ENCODE measurements at regions of chr4 and their contacts with region 1.

Region 1: DNA sequence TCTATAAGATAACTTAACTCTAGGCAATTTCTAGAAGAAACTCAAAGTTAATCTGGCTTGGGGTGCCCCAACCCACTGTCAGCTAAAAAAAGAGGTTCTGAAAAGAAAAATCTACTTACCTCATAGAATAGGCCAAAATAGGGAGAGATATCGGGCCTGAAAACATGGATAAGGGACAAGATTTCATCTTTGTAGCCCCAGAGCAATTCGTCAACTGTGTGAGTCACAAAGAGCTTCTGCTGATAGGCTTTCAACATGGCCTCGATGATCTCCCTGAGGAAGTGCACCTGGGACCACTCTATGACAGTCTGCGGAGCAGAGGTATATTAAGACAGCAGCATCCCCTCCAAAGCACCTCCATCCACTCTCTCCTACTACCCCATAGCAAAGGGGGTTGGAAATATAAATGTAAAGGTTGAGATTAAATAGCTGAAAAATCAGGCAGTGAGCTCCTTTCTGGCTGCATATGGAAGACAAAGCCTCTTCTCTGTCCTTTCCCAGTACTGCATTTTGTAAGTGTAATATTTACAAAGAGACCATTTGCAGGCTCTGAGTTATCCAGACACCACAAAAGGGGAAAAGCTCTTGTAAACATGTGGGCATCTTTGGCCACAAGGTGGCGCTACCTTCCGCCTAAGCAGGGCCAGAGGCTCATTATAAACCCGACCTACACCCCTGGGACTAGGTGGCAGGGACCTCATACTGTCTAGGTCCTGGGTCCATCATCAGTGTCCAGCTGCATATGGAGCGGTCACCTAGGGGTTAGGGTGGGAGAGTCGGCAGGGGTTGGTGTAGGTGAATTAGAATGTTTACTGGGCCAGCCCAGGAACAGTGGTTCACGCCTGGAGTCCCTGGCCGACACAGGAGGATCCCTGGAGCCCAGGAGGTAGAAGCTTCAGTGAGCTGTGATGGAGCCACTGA is 31.5 kb upstream of the NUP54 start:
- DNase-seq: peak; percentile 83
- ATAC-seq: peak; percentile 84
- H3K4me3 ChIP-seq: no peak overlapping the region
- H3K4me3 Mint-ChIP-seq: no peak overlapping the region
- H3K27ac ChIP-seq: no peak overlapping the region
- H3K27ac Mint-ChIP-seq: no peak overlapping the region
- H3K4me1 ChIP-seq: no peaks in the 10 kb centered on the region
- H3K4me1 Mint-ChIP-seq: peaks cover 4% of the 10 kb centered on the region
- H3K27me3 ChIP-seq: no peaks in the 10 kb centered on the region
- H3K27me3 Mint-ChIP-seq: no peaks in the 10 kb centered on the region
- CTCF ChIP-seq: peak; percentile 95

Region 2: DNA sequence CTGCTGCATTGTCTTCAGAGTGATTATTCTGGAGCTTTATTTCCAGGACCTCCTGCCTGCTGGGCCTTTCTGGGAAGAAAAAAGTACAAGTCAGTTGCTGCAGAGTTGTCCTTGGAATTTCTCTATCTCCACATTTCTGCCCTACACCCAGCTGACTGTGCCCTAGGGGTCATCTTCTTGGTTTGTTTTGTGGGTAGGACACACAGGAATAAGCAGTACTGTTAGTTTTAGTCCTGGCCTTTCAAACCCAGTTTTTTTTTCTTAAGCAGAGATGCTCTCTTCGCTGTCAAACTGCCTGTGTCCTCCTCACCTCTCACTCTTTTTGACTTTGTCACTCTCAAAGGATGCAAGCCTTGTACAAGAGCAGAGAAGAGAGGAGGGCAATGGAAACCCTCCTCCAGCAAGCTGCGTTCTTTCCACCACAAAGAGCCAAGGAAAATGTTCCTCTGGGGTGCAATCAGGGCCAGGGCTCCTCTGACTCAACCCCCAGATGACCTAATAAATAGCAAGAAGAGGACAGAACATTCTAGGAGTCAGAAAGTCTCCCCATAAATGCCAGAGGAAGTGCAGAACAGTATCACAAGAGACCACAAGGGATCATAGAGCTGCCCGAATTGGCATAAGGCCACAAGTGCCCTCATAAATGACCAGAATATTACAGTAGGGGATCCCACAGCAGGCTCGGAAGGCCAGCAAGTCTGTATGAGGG is 851.7 kb before region 1 on chr4:
- CTCF ChIA-PET with region 1: no interaction called
- POLR2A ChIA-PET with region 1: no interaction called
- intact Hi-C with region 1: no loop called
- DNase-seq: no peak
- ATAC-seq: no peak
- H3K4me3 ChIP-seq: no peak overlapping the region
- H3K4me3 Mint-ChIP-seq: no peak overlapping the region
- H3K27ac ChIP-seq: no peak overlapping the region
- H3K27ac Mint-ChIP-seq: no peak overlapping the region
- H3K4me1 ChIP-seq: no peaks in the 10 kb centered on the region
- H3K4me1 Mint-ChIP-seq: no peaks in the 10 kb centered on the region
- H3K27me3 ChIP-seq: peaks cover 0 to 11% (median 4%) of the 10 kb centered on the region in 4 experiments
- H3K27me3 Mint-ChIP-seq: peaks cover 24% of the 10 kb centered on the region
- CTCF ChIP-seq: no peak

Region 3: DNA sequence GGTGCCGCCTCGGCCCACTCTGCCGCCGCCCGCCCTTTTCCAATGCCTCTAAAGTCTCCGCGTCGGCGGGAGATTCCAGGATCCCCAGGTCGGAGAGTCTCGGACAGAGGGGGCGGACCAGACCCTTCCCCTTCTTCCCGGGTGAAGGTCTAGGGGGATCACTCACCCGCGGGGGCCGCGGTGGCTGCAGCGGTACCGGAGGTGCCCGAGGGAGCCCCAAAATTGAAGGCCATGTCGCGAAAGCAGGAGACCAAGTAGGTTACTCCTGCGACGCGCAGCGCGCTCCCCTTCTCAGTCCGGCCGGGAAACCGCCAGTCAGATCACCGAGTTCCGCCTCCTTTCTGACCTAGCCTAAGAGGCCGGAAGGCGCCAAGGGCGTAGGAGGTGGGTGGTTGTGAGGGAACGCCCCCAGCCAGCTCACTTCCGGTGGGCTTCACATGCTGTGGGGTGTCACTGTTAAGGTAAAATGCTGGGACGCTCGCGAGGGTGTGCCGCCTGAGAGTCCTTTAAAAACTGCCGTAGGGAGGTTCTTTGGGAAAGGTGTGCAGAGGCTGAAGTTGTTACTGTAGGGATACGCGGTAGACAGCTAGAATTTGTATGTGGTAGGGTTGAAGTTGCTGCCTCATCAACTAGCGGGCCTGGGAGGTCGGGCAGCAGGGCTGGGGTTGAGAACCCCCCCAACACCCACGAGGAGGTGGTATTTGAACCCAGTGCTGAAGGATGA is 31.4 kb before region 1 on chr4 and contains the start of gene NUP54:
- CTCF ChIA-PET with region 1: no interaction called
- POLR2A ChIA-PET with region 1: interaction called, 10 read pairs
- intact Hi-C with region 1: no loop called
- DNase-seq: peak; percentile 95
- ATAC-seq: peak; percentile 98
- H3K4me3 ChIP-seq: peak within 1 kb of the TSS; percentile 71 to 98 (median 97)
- H3K4me3 Mint-ChIP-seq: peak within 1 kb of the TSS; percentile 98
- H3K27ac ChIP-seq: peak within 1 kb of the TSS; percentile 77 to 91
- H3K27ac Mint-ChIP-seq: peak within 1 kb of the TSS; percentile 89
- H3K4me1 ChIP-seq: peaks cover 22 to 28% of the 10 kb centered on the region in 2 donors
- H3K4me1 Mint-ChIP-seq: peaks cover 35% of the 10 kb centered on the region
- H3K27me3 ChIP-seq: no peaks in the 10 kb centered on the region
- H3K27me3 Mint-ChIP-seq: no peaks in the 10 kb centered on the region
- CTCF ChIP-seq: no peak
- total RNA-seq, gene NUP54: 71.0 and 71.4 TPM in 2 replicates

Region 4: GRCh38 chr4:76198411-76199237 is 19.0 kb after region 1 on chr4:
- CTCF ChIA-PET with region 1: interaction called, 24 read pairs
- POLR2A ChIA-PET with region 1: no interaction called
- intact Hi-C with region 1: no loop called
- DNase-seq: peak; percentile 56
- ATAC-seq: peak; percentile 32
- H3K4me3 ChIP-seq: no peak overlapping the region
- H3K4me3 Mint-ChIP-seq: peak overlapping the region; percentile 36
- H3K27ac ChIP-seq: peak overlapping the region; percentile 30 to 42
- H3K27ac Mint-ChIP-seq: peak overlapping the region; percentile 64
- H3K4me1 ChIP-seq: peaks cover 50 to 54% of the 10 kb centered on the region in 2 donors
- H3K4me1 Mint-ChIP-seq: peaks cover 53% of the 10 kb centered on the region
- H3K27me3 ChIP-seq: no peaks in the 10 kb centered on the region
- H3K27me3 Mint-ChIP-seq: no peaks in the 10 kb centered on the region
- CTCF ChIP-seq: no peak

Region 5: DNA sequence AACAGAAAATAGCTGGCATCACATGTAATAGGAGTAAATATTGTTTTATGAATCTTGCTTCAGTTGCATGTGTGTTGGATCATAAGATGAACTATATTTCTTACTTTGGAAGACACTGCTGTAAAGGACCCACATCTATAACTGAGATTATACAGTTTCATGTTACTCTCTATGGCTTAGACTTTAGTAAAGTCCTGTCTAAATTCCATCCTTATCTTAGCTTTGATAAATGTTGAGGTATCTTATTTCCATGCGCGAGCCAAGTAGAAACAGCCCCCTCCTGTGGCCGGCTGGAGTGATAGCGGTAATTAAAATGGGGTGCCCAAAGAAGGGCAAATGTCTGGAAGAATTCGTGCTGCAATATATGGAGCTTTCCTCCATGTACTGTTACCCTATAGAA is 198.3 kb after region 1 on chr4:
- CTCF ChIA-PET with region 1: interaction called, 35 read pairs
- POLR2A ChIA-PET with region 1: no interaction called
- intact Hi-C with region 1: loop called (anchors 1 kb)
- DNase-seq: no peak
- ATAC-seq: no peak
- H3K4me3 ChIP-seq: no peak overlapping the region
- H3K4me3 Mint-ChIP-seq: no peak overlapping the region
- H3K27ac ChIP-seq: no peak overlapping the region
- H3K27ac Mint-ChIP-seq: no peak overlapping the region
- H3K4me1 ChIP-seq: no peaks in the 10 kb centered on the region
- H3K4me1 Mint-ChIP-seq: no peaks in the 10 kb centered on the region
- H3K27me3 ChIP-seq: no peaks in the 10 kb centered on the region
- H3K27me3 Mint-ChIP-seq: peaks cover 22% of the 10 kb centered on the region
- CTCF ChIP-seq: peak; percentile 48

Region 6: DNA sequence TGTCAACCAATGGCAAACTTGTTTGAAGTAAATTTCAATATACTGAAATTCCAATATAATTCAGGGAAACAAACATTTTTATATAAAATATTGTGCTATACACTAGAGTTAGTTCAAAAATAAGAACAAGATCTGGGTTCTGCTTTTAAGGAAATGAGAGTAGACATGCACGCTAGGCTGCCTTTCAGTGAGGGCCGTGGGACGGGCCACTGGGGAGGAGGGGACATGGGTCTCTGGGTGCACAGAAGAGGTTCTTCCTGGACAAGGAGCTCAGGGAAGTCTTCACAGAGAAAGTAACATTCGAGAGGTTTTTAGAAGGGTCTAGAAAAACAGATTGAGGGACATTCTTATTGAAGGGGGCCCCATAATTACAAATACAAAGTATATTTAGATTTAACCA is 319.8 kb after region 1 on chr4:
- CTCF ChIA-PET with region 1: interaction called, 78 read pairs
- POLR2A ChIA-PET with region 1: no interaction called
- intact Hi-C with region 1: no loop called
- DNase-seq: peak; percentile 73
- ATAC-seq: peak; percentile 92
- H3K4me3 ChIP-seq: no peak overlapping the region
- H3K4me3 Mint-ChIP-seq: peak overlapping the region; percentile 52
- H3K27ac ChIP-seq: peak overlapping the region in 1 of 2 donors; percentile 47
- H3K27ac Mint-ChIP-seq: peak overlapping the region; percentile 81
- H3K4me1 ChIP-seq: peaks cover 26 to 27% of the 10 kb centered on the region in 2 donors
- H3K4me1 Mint-ChIP-seq: peaks cover 39% of the 10 kb centered on the region
- H3K27me3 ChIP-seq: peaks cover 0 to 5% (median 0%) of the 10 kb centered on the region in 4 experiments
- H3K27me3 Mint-ChIP-seq: peaks cover under 1% of the 10 kb centered on the region
- CTCF ChIP-seq: no peak

Region 7: DNA sequence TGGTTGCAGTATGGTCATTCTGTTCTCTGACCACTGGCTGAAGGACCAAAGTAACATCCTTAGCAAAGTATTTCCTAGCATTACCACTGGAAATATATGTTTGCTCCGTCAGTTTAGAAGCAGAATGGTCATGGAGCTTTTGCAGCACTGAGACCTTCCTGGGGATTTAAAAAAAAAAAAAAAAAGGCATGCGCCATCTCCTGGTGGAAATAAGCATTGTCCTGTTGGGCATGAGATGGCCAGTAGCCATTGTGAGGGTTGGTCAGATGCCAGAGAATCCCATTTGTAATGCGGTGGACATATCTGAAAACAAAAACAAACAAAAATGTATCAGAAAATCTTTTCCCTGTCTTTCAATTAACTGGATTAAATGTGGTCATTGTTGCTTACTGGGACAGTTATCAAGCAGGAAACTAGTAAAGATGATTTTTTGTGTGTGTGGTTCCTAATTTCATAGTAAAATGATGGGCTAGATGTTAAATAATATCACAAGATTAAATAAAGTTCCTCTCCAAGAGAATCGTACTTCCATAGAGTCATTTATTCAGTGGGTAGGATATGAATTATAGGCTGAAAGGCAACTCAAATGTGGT is 578.7 kb after region 1 on chr4:
- CTCF ChIA-PET with region 1: interaction called, 8 read pairs
- POLR2A ChIA-PET with region 1: no interaction called
- intact Hi-C with region 1: loop called (anchors 2 kb)
- DNase-seq: peak; percentile 34
- ATAC-seq: no peak
- H3K4me3 ChIP-seq: no peak overlapping the region
- H3K4me3 Mint-ChIP-seq: no peak overlapping the region
- H3K27ac ChIP-seq: no peak overlapping the region
- H3K27ac Mint-ChIP-seq: no peak overlapping the region
- H3K4me1 ChIP-seq: no peaks in the 10 kb centered on the region
- H3K4me1 Mint-ChIP-seq: no peaks in the 10 kb centered on the region
- H3K27me3 ChIP-seq: no peaks in the 10 kb centered on the region
- H3K27me3 Mint-ChIP-seq: peaks cover 10% of the 10 kb centered on the region
- CTCF ChIP-seq: peak; percentile 81